ENCODE measurements at regions of chr11 and their contacts with region 1.

Region 1: DNA sequence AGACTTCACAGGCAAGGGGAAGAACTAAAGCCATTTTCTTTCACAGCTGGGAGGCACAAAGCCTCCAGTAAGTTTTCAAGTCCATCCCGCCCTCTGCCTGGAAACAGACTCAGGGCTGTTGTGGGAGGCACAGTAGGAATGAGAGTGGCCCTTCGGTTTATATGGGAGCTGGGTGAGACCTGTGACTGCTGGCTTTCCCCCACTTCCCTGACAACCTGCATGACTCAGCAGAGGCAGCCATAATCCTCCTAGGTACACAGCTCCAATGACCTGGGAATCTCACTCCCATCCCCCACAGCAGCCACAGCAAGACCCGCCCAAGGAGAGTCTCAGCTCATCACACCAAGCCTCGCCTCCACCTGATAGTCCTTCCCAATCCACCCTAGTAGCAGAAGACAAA is 12.1 kb upstream of the TMEM45B start:
- DNase-seq: no peak
- ATAC-seq: no peak
- H3K4me3 Mint-ChIP-seq: peak overlapping the region; percentile 29 to 77 (median 70)
- H3K27ac Mint-ChIP-seq: peak overlapping the region; percentile 73 to 91 (median 82)
- H3K4me1 Mint-ChIP-seq: peaks cover 34 to 56% (median 45%) of the 10 kb centered on the region in 4 donors
- H3K27me3 Mint-ChIP-seq: peaks cover 0 to 10% (median 1%) of the 10 kb centered on the region in 5 donors

Region 2: GRCh38 chr11:129815596-129816461 is 12.3 kb after region 1 on chr11 and contains the start of gene TMEM45B:
- POLR2A ChIA-PET with region 1: interaction called, 43 read pairs
- DNase-seq: peak in 8 of 10 donors; percentile 15 to 66 (median 24)
- ATAC-seq: peak; percentile 17 to 49
- H3K4me3 Mint-ChIP-seq: peak within 1 kb of the TSS; percentile 75 to 90 (median 82)
- H3K27ac Mint-ChIP-seq: peak within 1 kb of the TSS; percentile 78 to 96 (median 90)
- H3K4me1 Mint-ChIP-seq: peaks cover 14 to 54% (median 42%) of the 10 kb centered on the region in 4 donors
- H3K27me3 Mint-ChIP-seq: peaks cover 3 to 36% (median 26%) of the 10 kb centered on the region in 5 donors
- polyA plus RNA-seq, gene TMEM45B: 0.96 to 1.7 (median 1.1) TPM

Region 3: GRCh38 chr11:129828301-129828836 is 24.8 kb after region 1 on chr11:
- POLR2A ChIA-PET with region 1: no interaction called
- DNase-seq: no peak
- ATAC-seq: no peak
- H3K4me3 Mint-ChIP-seq: peak overlapping the region in 3 of 10 donors; percentile 3 to 42 (median 19)
- H3K27ac Mint-ChIP-seq: peak overlapping the region in 3 of 10 donors; percentile 9 to 47 (median 45)
- H3K4me1 Mint-ChIP-seq: peaks cover 0 to 14% (median 10%) of the 10 kb centered on the region in 4 donors
- H3K27me3 Mint-ChIP-seq: peaks cover 0 to 7% (median 0%) of the 10 kb centered on the region in 5 donors

Measured in naive thymus-derived CD8-positive, alpha-beta T cell (primary cell).